Right ventricle myocardium superior (tissue), 1 donor: ENCODE measurements at regions of chr17 and their contacts with region 1.

Region 1: GRCh38 chr17:36486204-36487194 is at the start of gene ZNHIT3:
- DNase-seq: peak; percentile 95
- ATAC-seq: peak; percentile 95
- total RNA-seq, gene ZNHIT3: 20.0 TPM

Region 2: DNA sequence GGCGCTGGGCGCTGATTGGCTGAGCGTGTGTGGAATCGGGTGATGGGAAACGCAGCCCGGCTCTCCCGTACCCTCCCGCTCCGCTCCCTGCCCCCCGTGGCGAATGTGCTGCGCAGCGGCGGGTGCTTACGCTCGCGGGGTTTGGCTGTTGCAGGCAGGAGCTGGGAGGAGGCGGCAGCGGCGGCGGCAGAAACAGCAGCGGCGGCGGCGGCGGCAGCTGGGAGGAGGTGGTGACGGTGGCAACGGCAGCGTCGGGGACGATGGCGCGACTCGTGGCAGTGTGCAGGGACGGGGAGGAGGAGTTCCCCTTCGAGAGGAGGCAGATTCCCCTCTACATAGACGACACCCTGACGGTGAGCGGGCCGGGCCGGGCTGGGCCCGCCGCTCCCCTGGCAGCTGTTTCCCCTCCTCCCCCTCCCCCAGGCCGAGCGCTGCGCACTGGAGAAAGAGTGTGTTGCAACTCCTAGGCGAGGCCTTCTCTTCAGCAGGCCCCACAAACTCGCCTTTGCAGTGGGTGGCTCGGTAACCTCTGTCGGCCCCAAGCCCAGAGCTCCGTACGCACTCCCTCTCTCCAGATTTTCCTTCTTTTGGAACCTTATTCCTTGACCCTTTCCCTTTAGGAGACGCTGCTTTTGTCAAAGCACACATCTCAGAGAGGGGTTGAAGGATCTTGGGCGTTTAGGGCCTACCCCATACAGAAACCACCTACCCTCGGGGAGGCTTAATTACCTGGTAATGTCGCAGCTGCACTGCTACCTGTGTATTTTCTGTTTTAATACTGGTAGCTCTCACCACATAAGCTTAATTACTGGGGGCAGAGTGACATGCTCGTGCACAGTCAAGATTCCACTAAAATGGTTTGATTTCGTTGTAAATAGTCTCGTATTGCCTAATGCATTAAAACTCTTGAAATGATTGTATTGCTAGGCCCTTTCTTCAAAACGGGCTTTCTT is 59.2 kb after region 1 on chr17:
- intact Hi-C with region 1: loop called (anchors 10 kb)
- DNase-seq: peak; percentile 98
- ATAC-seq: peak; percentile 93